ENCODE measurements at regions of chr4 and their contacts with region 1.

Region 1: GRCh38 chr4:167234316-167234881 is at the start of gene SPOCK3:
- DNase-seq: peak; percentile 44
- ATAC-seq: peak; percentile 91
- H3K4me3 ChIP-seq: peak within 1 kb of the TSS; percentile 89
- H3K27ac ChIP-seq: no peak within 1 kb of the TSS
- H3K4me1 ChIP-seq: no peaks in the 10 kb centered on the region
- H3K27me3 ChIP-seq: no peaks in the 10 kb centered on the region
- CTCF ChIP-seq: no peak
- total RNA-seq, gene SPOCK3: 1.9 and 2.2 TPM in 2 replicates

Region 2: DNA sequence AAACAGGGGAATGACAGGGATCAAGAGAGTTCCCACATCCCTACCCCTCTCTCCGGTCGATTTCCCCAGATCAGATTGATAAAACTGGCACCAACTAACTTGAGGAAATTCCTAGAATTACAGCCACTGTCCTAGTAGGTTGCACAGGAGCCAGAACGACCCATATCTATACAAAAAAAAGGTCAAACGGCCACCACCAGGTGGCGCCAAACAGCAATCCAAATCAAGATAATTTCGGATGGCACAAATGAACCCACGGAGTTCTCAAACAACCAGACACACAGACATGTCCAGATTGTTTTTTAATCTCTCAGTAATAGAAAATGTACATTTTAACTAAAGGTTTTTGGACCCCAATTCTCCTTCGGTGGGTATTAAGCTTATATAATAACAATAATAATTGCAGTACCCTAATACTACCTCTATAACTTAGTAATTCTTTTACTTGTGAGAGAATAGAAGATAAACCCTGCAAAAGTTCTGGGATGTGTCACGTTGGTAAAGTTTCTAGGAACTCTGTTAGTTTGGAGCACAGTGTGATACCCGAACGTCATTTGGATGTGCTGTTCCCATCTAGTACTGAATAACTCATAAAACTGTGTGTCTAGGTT is 212.7 kb before region 1 on chr4:
- CTCF ChIA-PET with region 1: no interaction called
- POLR2A ChIA-PET with region 1: no interaction called
- intact Hi-C with region 1: loop called (anchors 5 kb)
- DNase-seq: peak; percentile 74
- ATAC-seq: peak; percentile 63
- H3K4me3 ChIP-seq: no peak overlapping the region
- H3K27ac ChIP-seq: no peak overlapping the region
- H3K4me1 ChIP-seq: peaks cover 27% of the 10 kb centered on the region
- H3K27me3 ChIP-seq: no peaks in the 10 kb centered on the region
- CTCF ChIP-seq: peak; percentile 84

Region 3: DNA sequence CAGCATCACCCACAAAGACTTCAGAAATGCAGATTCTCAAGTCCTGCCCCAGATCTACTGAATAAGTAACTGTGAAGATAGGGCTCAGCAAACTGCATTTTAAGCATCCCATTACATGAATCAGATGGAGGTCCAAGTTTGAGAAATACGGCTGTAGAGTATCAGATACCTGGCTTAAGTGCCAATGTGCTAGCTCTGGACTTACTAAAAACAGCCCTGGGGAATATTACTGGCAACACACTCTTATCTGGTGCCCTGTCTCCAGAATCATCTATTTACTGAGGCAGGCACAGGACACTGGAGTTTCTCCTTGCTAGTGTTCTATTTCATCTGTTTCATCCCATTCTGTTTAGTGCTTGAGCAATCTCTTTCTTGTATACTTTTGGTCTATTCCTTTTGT is 105.3 kb before region 1 on chr4:
- CTCF ChIA-PET with region 1: no interaction called
- POLR2A ChIA-PET with region 1: interaction called, 18 read pairs
- intact Hi-C with region 1: no loop called
- DNase-seq: no peak
- ATAC-seq: no peak
- H3K4me3 ChIP-seq: no peak overlapping the region
- H3K27ac ChIP-seq: no peak overlapping the region
- H3K4me1 ChIP-seq: no peaks in the 10 kb centered on the region
- H3K27me3 ChIP-seq: no peaks in the 10 kb centered on the region
- CTCF ChIP-seq: no peak

Region 4: GRCh38 chr4:167282171-167282864 is 47.9 kb after region 1 on chr4:
- CTCF ChIA-PET with region 1: no interaction called
- POLR2A ChIA-PET with region 1: no interaction called
- intact Hi-C with region 1: loop called (anchors 5 kb)
- DNase-seq: peak; percentile 66
- ATAC-seq: peak; percentile 96
- H3K4me3 ChIP-seq: peak overlapping the region; percentile 38; the same call in 1 of the 2 replicates
- H3K27ac ChIP-seq: peak overlapping the region; percentile 76
- H3K4me1 ChIP-seq: peaks cover 12% of the 10 kb centered on the region
- H3K27me3 ChIP-seq: no peaks in the 10 kb centered on the region
- CTCF ChIP-seq: no peak

Region 5: DNA sequence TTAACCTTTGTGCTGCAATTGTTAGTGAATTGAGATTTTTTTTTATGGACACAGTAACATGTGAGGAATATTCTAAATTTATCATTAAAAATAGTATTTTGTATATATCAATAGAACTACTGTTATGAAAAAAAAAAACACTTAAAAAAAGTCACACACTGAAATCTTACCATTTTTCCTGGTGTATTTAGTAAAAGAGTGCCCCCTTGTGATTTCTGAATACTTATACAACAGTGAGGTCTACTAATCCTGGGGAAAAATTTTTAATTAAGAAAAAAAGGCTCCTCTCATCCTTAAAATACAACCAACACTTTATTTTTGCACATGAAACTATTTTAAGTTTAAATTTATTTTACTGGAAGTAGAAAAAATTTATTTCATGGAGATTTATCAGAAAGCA is 56.3 kb after region 1 on chr4:
- CTCF ChIA-PET with region 1: no interaction called
- POLR2A ChIA-PET with region 1: no interaction called
- intact Hi-C with region 1: loop called (anchors 2 kb)
- DNase-seq: peak; percentile 42
- ATAC-seq: no peak
- H3K4me3 ChIP-seq: no peak overlapping the region
- H3K27ac ChIP-seq: no peak overlapping the region
- H3K4me1 ChIP-seq: no peaks in the 10 kb centered on the region
- H3K27me3 ChIP-seq: no peaks in the 10 kb centered on the region
- CTCF ChIP-seq: peak; percentile 63

Measured in PC-3 (cell line).